Colonic mucosa (tissue), 4 donors: ENCODE measurements at regions of chr5 and their contacts with region 1.

Region 1: DNA sequence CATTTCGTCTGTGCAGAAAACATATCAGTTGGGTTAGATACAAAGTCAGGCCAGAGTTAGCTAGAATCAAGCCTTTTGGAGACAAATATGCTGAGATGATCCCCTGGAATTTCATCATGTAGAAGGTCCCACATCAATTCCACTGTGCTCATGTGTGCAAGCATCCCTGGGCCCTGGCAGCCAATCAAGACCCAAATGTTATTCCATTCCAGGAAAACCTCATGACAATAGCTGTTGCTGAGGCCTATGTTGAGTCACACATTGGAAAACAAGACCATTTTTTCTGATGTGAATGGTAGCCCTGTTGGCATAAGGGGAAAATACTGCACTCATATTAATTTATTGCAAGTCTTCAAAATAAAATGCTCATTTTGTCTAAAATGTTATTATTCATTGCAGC is 11.5 kb downstream of the SPOCK1 start:
- DNase-seq: no peak
- H3K4me3 ChIP-seq: no peak overlapping the region
- H3K27ac ChIP-seq: no peak overlapping the region
- H3K4me1 ChIP-seq: no peaks in the 10 kb centered on the region
- H3K27me3 ChIP-seq: no peaks in the 10 kb centered on the region
- CTCF ChIP-seq: no peak

Region 2: GRCh38 chr5:137667341-137667740 is 179.7 kb after region 1 on chr5:
- intact Hi-C with region 1: no loop called
- DNase-seq: no peak
- H3K4me3 ChIP-seq: no peak overlapping the region
- H3K27ac ChIP-seq: no peak overlapping the region
- H3K4me1 ChIP-seq: no peaks in the 10 kb centered on the region
- H3K27me3 ChIP-seq: no peaks in the 10 kb centered on the region
- CTCF ChIP-seq: no peak

Region 3: GRCh38 chr5:138601444-138601843 is 1113.8 kb after region 1 on chr5:
- intact Hi-C with region 1: loop called (anchors 10 kb)
- DNase-seq: no peak
- H3K4me3 ChIP-seq: no peak overlapping the region
- H3K27ac ChIP-seq: no peak overlapping the region
- H3K4me1 ChIP-seq: no peaks in the 10 kb centered on the region
- H3K27me3 ChIP-seq: no peaks in the 10 kb centered on the region
- CTCF ChIP-seq: no peak